Mammary epithelial cell (primary cell): ENCODE measurements at regions of chr15 and their contacts with region 1.

Region 1: GRCh38 chr15:72272213-72273002 is at the start of gene PARP6:
- DNase-seq: peak; percentile 99
- H3K4me3 ChIP-seq: peak within 1 kb of the TSS; percentile 70 to 84 (median 77)
- H3K27ac ChIP-seq: peak within 1 kb of the TSS; percentile 68
- H3K4me1 ChIP-seq: peaks cover 20% of the 10 kb centered on the region
- H3K27me3 ChIP-seq: no peaks in the 10 kb centered on the region
- CTCF ChIP-seq: peak; percentile 51 to 63
- total RNA-seq, gene PARP6: 28.3 to 58.2 TPM

Region 2: DNA sequence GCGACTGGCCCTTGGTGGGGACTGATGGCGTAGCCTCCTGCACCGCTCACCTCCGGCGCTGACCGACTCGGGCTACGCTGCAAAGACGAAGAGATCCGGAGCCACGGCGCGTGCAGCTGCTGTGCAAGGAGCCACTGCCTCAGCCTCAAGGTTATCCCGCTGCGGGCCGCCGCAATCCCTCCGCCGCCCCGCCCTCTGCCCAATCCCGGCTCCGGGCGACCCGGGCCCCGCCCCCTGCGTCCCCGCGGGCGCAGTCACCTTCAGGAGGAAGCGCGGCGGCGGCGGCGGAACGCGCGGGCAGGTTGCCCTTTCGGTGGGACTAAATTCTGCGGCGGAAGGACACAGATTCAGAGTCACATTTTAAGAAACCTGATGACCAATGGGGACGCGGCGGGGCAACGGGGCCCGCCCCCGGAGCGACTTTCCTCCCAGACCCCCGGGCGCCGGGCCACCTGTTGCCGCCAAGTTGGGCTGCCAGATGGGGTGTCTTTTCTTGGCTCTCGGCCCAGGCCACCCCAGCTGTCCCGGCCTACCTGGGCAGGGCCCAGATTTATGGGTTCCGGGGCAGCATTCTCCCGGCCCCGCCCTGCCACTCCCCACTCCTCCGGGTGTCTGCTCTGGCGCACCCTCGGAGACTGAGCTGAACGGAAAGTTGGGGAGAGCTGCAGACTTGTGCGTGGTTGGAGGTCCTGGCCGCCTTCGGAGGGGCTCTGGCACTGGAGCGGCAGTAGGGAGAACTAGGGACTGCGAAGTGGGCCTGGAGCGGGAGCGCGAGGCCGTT is 41.2 kb before region 1 on chr15 and contains the start of gene PKM:
- CTCF ChIA-PET with region 1: no interaction called
- dilution Hi-C with region 1: no loop called
- in situ Hi-C with region 1: no loop called
- intact Hi-C with region 1: loop called (anchors 1 kb)
- DNase-seq: peak; percentile 99
- H3K4me3 ChIP-seq: peak within 1 kb of the TSS; percentile 84 to 89 (median 86)
- H3K27ac ChIP-seq: peak within 1 kb of the TSS; percentile 92
- H3K4me1 ChIP-seq: peaks cover 27% of the 10 kb centered on the region
- H3K27me3 ChIP-seq: no peaks in the 10 kb centered on the region
- CTCF ChIP-seq: no peak
- total RNA-seq, gene PKM: 2,783 to 3,063 TPM